ENCODE measurements at regions of chr12 and their contacts with region 1.

Region 1: DNA sequence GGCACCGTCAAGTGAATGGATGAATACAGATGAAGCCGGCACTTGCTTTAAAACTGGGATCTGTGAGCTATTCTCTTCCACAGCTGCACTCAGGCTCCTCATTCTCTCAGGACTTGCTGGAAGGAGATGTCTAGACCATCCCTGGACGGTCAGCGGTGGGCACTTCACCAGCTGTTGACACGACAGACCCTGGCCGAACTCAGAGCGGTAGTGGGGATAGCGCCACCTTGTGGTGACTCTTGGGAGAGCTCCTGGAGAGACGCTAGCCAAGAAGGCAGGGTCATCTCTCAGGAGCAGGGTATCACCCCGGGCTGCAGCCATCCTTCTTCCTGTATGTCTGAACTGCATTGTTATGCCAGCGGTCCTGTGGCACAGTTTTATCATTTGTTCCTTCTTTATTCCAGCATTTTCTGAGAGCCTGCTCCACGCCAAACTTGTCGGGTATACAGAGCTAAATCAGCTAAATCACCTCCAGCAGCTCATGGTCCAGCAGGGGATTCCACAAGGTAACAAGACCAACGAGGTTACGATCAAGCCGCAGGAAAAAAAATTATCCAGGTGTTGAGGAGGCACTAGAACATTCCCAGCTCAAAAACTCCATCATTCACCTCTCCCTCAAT is 10.0 kb downstream of the WNT1 start:
- DNase-seq: no peak
- ATAC-seq: peak; percentile 65
- H3K4me3 ChIP-seq: no peak overlapping the region
- H3K27ac ChIP-seq: no peak overlapping the region
- H3K4me1 ChIP-seq: no peaks in the 10 kb centered on the region
- H3K27me3 ChIP-seq: peaks cover 8% of the 10 kb centered on the region
- CTCF ChIP-seq: peak; percentile 95

Region 2: DNA sequence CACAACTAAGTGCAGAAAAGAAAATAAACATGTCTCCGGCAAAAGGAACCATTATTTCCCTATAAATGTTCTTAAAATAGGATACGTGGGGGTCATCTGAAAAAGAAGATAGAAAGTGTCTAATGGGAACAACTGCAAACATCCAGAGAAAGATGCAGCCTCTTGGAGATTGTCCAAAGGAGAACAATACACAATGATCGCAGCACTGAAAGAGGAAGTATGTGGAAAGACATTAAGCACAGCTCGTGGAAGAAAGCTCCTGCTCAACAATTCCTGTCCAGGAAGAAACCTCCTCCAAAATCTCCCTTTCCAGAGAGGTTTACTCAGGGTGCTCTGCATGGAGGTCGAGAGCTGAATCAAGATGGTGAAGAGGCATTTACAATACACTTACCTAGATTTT is 415.8 kb before region 1 on chr12:
- CTCF ChIA-PET with region 1: interaction called, 11 read pairs
- POLR2A ChIA-PET with region 1: no interaction called
- in situ Hi-C with region 1: no loop called
- intact Hi-C with region 1: no loop called
- DNase-seq: no peak
- ATAC-seq: no peak; the same call in 1 of the 2 replicates
- H3K4me3 ChIP-seq: peak overlapping the region in 1 of 2 experiments; percentile 11; a peak in 1 of 4 replicates
- H3K27ac ChIP-seq: no peak overlapping the region
- H3K4me1 ChIP-seq: no peaks in the 10 kb centered on the region
- H3K27me3 ChIP-seq: no peaks in the 10 kb centered on the region
- CTCF ChIP-seq: no peak

Region 3: DNA sequence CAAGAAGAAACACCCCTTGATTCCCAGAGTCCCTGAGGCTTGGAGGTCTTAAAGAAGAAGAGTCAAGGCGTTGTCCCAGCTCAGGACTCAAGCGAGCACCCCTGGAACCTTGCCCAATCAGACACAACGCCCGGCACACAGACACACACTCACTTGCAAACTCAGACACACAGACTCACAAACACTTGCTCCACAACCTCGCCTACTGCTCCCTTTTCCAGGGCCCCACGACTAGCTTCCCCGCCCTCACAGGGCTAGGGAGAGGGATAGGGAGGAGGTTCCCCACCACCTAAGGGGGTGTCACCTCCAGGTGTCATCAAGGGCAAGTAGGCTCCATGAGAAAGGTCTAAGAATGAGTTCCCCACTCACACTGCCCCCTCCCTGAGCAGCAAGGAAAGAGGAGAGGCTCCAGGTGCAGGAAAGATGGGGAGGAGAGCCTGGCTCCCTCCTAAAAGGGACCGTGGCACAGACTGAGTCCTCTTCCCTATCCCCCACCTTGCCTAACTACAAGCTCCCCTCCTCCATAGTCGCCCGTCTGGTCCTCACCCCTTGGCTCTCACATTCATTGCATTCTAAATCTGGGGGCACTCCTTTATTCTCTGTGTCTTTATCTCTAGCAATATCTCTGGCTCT is 17.3 kb before region 1 on chr12:
- CTCF ChIA-PET with region 1: interaction called, 15 read pairs
- POLR2A ChIA-PET with region 1: no interaction called
- in situ Hi-C with region 1: no loop called
- intact Hi-C with region 1: no loop called
- DNase-seq: no peak
- ATAC-seq: peak; percentile 28
- H3K4me3 ChIP-seq: peak overlapping the region; percentile 34 to 59
- H3K27ac ChIP-seq: peak overlapping the region; percentile 69
- H3K4me1 ChIP-seq: peaks cover 20% of the 10 kb centered on the region
- H3K27me3 ChIP-seq: no peaks in the 10 kb centered on the region
- CTCF ChIP-seq: no peak

Region 4: GRCh38 chr12:49008943-49009342 is 20.8 kb after region 1 on chr12:
- CTCF ChIA-PET with region 1: interaction called, 12 read pairs
- POLR2A ChIA-PET with region 1: no interaction called
- in situ Hi-C with region 1: no loop called
- intact Hi-C with region 1: no loop called
- DNase-seq: no peak
- ATAC-seq: no peak; the same call in 1 of the 2 replicates
- H3K4me3 ChIP-seq: no peak overlapping the region
- H3K27ac ChIP-seq: no peak overlapping the region
- H3K4me1 ChIP-seq: no peaks in the 10 kb centered on the region
- H3K27me3 ChIP-seq: no peaks in the 10 kb centered on the region
- CTCF ChIP-seq: no peak

Region 5: DNA sequence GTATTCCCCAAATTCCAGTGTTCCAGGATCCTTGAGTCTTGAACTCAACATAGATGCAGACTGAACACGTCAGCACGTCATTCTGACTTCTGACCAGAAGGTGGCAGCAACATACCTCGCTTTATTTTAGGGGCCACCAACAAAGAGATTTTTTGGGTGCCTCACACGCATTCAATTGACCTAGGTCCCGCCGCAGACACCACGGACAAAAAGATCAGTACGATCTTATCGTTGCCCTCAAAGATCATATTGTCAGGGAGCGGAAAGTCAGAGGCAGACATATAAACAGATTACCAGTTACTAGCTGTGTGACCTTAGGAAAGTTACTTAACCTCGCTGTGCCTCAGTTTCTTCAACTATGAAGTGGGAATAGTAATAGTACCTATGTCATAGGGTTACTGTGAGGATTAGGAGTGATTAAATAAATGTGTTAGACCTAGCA is 300.3 kb after region 1 on chr12:
- CTCF ChIA-PET with region 1: no interaction called
- POLR2A ChIA-PET with region 1: no interaction called
- in situ Hi-C with region 1: no loop called
- intact Hi-C with region 1: no loop called
- DNase-seq: no peak
- ATAC-seq: peak; percentile 70; the same call in 1 of the 2 replicates
- H3K4me3 ChIP-seq: no peak overlapping the region
- H3K27ac ChIP-seq: no peak overlapping the region
- H3K4me1 ChIP-seq: no peaks in the 10 kb centered on the region
- H3K27me3 ChIP-seq: no peaks in the 10 kb centered on the region
- CTCF ChIP-seq: peak; percentile 91